ENCODE measurements at regions of chr7 and their contacts with region 1.

Region 1: DNA sequence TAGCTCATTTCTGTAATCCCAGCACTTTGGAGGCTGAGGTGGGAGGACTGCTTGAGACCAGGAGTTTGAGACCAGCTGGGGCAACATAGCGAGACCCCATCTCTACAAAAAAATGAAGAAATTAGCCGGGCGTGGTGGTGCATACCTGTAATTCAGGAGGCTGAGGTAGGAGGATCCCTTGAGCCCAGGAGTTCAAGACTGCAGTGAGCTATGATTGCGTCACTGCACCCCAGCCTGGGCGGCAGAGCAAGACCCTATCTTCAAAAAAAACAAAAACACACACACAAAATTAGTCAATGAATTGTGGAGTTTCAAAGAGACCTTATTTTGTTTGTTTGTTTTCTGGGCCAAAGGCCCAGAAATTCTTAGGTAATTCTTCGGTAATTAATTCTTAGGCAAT is 110.0 kb downstream of the CUX1 start:
- DNase-seq: no peak
- H3K4me3 ChIP-seq: no peak overlapping the region
- H3K27ac ChIP-seq: no peak overlapping the region
- H3K4me1 ChIP-seq: peaks cover 22% of the 10 kb centered on the region
- CTCF ChIP-seq: no peak

Region 2: GRCh38 chr7:101126651-101127280 is 800.6 kb before region 1 on chr7 and contains the start of gene SERPINE1:
- CTCF ChIA-PET with region 1: no interaction called
- POLR2A ChIA-PET with region 1: no interaction called
- intact Hi-C with region 1: no loop called
- DNase-seq: peak; percentile 76
- H3K4me3 ChIP-seq: peak within 1 kb of the TSS; percentile 7
- H3K27ac ChIP-seq: no peak within 1 kb of the TSS
- H3K4me1 ChIP-seq: peaks cover 23% of the 10 kb centered on the region
- CTCF ChIP-seq: peak; percentile 55
- total RNA-seq, gene SERPINE1: not detected in 2 replicates

Region 3: DNA sequence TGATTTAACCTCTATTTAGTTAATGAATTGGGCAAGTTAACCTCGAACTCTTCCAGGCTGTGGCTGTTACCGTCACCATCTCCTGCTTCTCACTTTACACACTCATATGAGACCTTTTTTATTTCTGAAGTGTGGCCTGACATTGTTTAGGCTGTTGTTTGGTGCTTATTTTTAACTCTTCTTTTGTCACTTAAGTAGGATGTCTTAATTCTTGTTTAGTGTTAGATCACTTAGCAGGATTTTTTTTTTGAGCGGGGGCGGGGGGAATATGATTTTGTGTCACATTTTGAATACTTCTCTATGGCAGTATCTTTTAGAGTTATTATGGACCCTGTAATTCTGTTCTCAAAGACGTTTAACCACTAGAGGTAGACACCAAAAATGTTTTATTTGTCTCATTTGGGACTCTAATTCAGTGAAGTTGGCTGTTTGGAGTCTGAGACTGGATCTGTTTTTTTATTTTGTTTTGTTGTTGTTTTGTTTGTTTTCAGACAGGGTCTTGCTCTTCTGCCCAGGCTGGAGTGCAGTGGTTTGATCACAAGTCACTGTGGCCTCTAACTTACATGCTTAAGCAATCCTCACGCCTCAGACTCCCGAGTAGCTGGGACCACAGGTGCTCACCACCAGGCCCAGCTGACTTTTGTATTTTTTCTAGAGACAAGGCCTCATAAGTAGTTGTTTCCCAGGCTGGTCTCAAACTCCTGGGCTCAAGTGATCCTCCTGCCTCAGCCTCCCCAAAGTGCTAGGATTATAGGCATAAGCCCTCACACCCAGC is 36.5 kb before region 1 on chr7:
- CTCF ChIA-PET with region 1: interaction called, 10 read pairs
- POLR2A ChIA-PET with region 1: no interaction called
- intact Hi-C with region 1: loop called (anchors 5 kb)
- DNase-seq: peak; percentile 50
- H3K4me3 ChIP-seq: peak overlapping the region; percentile 39
- H3K27ac ChIP-seq: peak overlapping the region; percentile 93
- H3K4me1 ChIP-seq: peaks cover 98% of the 10 kb centered on the region
- CTCF ChIP-seq: peak; percentile 26; the same call in 1 of the 2 replicates

Region 4: DNA sequence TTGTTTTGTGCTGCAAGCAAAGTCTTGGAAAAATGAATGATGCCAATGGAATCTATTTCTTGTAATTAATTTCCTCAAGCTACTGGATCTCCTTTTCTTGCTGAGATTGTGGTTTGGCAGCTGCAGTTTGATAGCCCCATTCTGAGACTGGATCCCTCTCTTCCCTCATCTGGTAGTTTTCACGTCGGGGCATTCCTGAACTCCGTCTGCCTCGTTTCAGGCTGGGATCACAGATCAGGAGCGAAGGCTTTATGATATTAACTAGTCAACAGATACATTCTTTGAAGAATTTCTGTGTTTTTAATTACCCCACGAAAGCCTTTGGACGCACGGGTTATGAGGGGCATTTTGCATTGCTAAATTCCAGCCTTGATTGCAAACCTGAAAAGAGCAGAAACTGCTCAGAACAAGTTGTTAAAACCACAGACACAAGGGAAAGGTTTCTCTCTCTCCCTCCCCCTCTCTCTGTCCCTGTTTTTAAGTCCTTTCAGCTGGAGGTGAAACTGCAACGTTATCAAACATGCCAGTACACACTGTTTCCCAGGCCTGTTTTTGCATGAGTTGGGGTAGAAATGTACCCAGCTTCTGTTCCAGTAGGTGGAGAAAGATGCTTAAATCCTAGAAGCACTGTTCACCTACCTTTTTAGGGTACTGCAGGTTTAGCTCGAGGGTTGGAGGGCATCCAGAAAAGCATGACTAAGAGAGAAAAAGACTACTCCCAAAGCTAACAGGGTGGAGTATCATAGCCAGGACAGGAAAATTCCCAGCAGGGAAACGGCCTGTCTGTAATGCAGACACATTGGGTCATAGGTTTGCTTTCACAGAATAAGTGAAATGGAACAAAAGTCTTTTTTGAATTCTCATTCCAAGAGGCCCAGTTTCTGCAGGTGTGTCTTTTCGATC is 14.3 kb after region 1 on chr7:
- CTCF ChIA-PET with region 1: no interaction called
- POLR2A ChIA-PET with region 1: no interaction called
- intact Hi-C with region 1: no loop called
- DNase-seq: no peak
- H3K4me3 ChIP-seq: no peak overlapping the region
- H3K27ac ChIP-seq: peak overlapping the region; percentile 72
- H3K4me1 ChIP-seq: peaks cover 83% of the 10 kb centered on the region
- CTCF ChIP-seq: no peak

Region 5: GRCh38 chr7:102175423-102176170 is 248.2 kb after region 1 on chr7:
- CTCF ChIA-PET with region 1: no interaction called
- POLR2A ChIA-PET with region 1: no interaction called
- intact Hi-C with region 1: no loop called
- DNase-seq: no peak
- H3K4me3 ChIP-seq: no peak overlapping the region
- H3K27ac ChIP-seq: no peak overlapping the region
- H3K4me1 ChIP-seq: no peaks in the 10 kb centered on the region
- CTCF ChIP-seq: no peak